Calu3 (cell line): ENCODE measurements at regions of chr17 and their contacts with region 1.

Region 1: GRCh38 chr17:39621523-39622379 is 5.0 kb upstream of the PPP1R1B start:
- DNase-seq: peak; percentile 100
- H3K4me3 Mint-ChIP-seq: peak overlapping the region; percentile 18
- H3K27ac Mint-ChIP-seq: peak overlapping the region; percentile 3
- H3K4me1 Mint-ChIP-seq: peaks cover 55% of the 10 kb centered on the region
- H3K27me3 Mint-ChIP-seq: peaks cover 83% of the 10 kb centered on the region
- CTCF ChIP-seq: no peak

Region 2: GRCh38 chr17:39461113-39461925 is 160.4 kb before region 1 on chr17 and contains the start of gene CDK12:
- CTCF ChIA-PET with region 1: interaction called, 27 read pairs
- intact Hi-C with region 1: no loop called
- DNase-seq: peak; percentile 100
- H3K4me3 Mint-ChIP-seq: peak within 1 kb of the TSS; percentile 79
- H3K27ac Mint-ChIP-seq: peak within 1 kb of the TSS; percentile 92
- H3K4me1 Mint-ChIP-seq: peaks cover 20% of the 10 kb centered on the region
- H3K27me3 Mint-ChIP-seq: no peaks in the 10 kb centered on the region
- CTCF ChIP-seq: no peak
- total RNA-seq, gene CDK12: 321 and 329 TPM in 2 replicates

Region 3: DNA sequence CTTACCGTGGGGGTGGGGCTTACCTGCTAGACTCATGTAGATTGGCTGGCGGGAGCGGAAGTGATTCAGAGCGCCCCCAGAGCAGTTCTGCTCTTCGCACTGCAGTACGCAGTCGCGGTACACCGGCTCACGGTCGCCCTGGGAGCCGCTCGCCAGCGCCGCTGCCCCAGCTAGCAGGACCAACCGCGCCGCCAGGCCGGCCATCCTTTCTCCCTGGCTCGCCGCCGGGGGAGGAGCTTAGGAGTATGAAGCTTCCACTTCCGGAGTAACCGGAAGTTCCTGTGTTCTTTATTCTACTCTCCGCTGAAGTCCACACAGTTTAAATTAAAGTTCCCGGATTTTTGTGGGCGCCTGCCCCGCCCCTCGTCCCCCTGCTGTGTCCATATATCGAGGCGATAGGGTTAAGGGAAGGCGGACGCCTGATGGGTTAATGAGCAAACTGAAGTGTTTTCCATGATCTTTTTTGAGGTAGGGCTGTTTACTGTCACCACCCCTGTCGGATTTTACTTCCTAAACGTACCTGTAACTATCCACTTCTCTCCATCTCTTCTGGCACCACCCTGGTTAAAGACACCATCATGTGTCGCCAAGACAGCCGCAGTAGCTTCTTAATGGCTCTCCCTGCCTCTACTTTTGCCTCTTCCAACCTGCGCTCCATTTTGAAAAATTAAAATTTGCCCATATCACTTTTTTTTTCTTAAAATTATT is 66.2 kb after region 1 on chr17 and contains the start of gene PGAP3:
- CTCF ChIA-PET with region 1: interaction called, 42,089 read pairs
- intact Hi-C with region 1: loop called (anchors 1 kb)
- DNase-seq: peak; percentile 100
- H3K4me3 Mint-ChIP-seq: peak within 1 kb of the TSS; percentile 64
- H3K27ac Mint-ChIP-seq: peak within 1 kb of the TSS; percentile 63
- H3K4me1 Mint-ChIP-seq: peaks cover 27% of the 10 kb centered on the region
- H3K27me3 Mint-ChIP-seq: no peaks in the 10 kb centered on the region
- CTCF ChIP-seq: no peak
- total RNA-seq, gene PGAP3: 1,186 and 1,276 TPM in 2 replicates

Region 4: DNA sequence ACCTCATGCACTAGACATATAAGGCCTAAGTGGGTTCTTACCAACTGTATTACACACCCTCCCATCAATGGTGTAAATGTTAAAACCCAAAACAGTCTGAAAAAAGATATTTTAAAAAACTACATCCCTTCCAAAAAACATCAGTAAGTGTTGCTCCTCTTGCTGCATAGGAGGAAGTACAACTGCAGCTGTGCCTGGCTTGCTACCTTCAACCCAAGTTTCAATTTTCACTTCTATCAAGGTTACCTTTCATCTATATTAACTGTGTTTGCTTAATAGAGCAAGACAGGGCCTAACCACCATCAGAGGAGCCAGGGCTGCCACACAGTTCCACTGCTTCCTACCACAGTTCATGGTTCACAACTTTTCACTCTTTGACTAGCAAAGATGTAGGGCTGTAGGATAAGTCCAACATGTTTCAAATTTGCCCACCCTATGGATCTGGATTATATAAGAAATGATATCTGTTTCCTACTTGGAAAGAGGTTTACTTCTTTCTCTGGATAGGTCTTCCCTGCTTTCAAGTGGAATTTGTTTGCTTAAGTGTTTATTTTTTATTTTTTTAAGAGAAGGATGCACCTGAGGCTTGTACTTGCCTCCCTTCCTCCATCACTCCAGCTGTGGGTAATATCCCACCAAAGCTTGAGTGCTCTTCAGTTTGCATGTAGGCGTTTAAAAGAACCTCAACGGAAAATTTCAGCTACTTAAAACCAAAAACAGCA is 172.7 kb after region 1 on chr17:
- CTCF ChIA-PET with region 1: interaction called, 117 read pairs
- intact Hi-C with region 1: no loop called
- DNase-seq: peak; percentile 73
- H3K4me3 Mint-ChIP-seq: no peak overlapping the region
- H3K27ac Mint-ChIP-seq: no peak overlapping the region
- H3K4me1 Mint-ChIP-seq: no peaks in the 10 kb centered on the region
- H3K27me3 Mint-ChIP-seq: no peaks in the 10 kb centered on the region
- CTCF ChIP-seq: no peak

Region 5: DNA sequence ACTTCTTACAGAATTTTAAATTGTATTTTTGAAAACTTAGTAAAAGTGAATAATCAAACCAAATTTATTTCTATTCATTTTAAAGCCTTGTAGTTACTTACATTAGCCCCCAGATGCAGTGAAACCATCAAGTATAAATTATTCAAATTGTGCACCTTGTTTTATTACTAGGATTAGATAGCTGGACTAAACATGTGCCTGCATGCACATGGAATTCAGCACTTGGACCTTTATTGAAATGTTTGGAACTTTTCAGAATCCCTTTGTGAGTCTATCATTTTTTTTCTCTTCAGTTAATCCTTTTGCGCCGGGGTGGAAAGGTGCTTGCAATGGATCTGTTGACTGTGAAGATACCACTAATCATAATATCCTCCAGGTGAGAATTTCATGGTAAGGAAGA is 251.0 kb after region 1 on chr17:
- CTCF ChIA-PET with region 1: interaction called, 190 read pairs
- intact Hi-C with region 1: no loop called
- DNase-seq: peak; percentile 78
- H3K4me3 Mint-ChIP-seq: no peak overlapping the region
- H3K27ac Mint-ChIP-seq: no peak overlapping the region
- H3K4me1 Mint-ChIP-seq: no peaks in the 10 kb centered on the region
- H3K27me3 Mint-ChIP-seq: peaks cover 11% of the 10 kb centered on the region
- CTCF ChIP-seq: no peak

Region 6: DNA sequence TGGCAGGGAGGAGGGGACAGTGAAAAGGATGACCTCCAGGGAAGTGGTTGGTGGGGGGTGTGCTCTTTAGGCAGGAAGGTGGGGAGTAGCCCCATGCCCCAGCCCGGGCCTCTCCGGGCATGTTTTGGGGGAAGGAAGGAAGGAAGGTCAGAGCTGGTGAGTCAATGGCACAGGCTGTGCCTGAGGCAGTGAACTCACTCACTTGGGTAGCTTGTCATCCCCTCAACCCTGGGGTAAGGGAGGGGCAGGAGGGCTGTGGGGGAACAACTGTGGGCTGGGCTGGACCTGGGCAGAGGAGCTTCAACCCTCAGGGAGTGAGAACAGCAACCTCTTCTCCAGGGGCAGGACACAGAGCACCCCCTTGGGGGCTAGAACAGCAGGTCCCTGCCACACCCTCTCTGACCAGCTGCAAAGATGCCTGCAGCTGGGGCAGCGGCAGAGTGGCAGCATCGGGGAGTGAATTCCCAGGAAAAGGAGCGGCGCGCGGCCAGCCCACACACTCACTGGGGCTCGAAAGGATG is 399.8 kb after region 1 on chr17:
- CTCF ChIA-PET with region 1: interaction called, 113 read pairs
- intact Hi-C with region 1: no loop called
- DNase-seq: peak; percentile 88
- H3K4me3 Mint-ChIP-seq: no peak overlapping the region
- H3K27ac Mint-ChIP-seq: no peak overlapping the region
- H3K4me1 Mint-ChIP-seq: peaks cover 36% of the 10 kb centered on the region
- H3K27me3 Mint-ChIP-seq: peaks cover 23% of the 10 kb centered on the region
- CTCF ChIP-seq: no peak

Region 7: DNA sequence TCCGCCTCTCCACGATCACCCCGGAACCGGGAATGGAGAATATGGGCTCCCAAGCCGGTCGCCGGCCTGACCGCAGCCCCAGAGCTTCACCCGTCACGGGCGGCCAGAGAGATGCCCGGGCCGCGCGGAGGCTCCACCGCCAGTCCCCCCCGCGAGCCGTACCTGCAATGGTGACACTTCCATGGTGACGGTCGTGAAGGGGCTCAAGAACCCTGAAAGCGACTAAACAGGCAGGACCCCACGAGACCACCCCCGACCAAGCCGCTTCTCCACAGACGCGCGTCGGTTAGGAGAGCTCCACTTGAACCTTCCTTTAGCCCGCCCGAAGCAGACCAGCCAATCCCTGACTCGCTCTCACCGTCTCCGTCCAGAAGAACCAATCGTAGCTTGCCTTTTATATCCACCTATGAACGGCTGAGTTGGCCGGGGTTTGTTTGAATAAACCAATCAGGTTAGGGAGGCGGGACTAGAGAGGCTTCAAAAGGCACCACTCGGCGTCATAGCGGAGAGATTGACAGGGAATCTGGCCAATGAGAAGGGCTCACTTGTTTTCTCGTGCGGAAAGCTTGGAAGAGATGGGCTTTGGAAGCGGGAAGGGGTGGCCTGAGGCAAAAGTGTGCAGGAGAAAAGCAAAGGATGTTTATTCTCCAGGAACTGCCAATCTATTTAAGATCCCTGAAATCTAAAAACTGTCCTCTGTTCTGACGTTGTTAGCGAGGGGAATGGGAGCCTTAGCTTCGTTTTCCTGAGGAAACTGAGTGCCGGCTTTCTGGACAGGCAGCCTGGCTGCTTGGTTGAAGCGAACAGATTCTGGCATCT is 796.1 kb after region 1 on chr17 and contains the start of gene TOP2A:
- CTCF ChIA-PET with region 1: interaction called, 15 read pairs
- intact Hi-C with region 1: loop called (anchors 5 kb)
- DNase-seq: peak; percentile 100
- H3K4me3 Mint-ChIP-seq: peak within 1 kb of the TSS; percentile 96
- H3K27ac Mint-ChIP-seq: peak within 1 kb of the TSS; percentile 94
- H3K4me1 Mint-ChIP-seq: peaks cover 42% of the 10 kb centered on the region
- H3K27me3 Mint-ChIP-seq: no peaks in the 10 kb centered on the region
- CTCF ChIP-seq: no peak
- total RNA-seq, gene TOP2A: 1,389 and 1,672 TPM in 2 replicates